Activated CD4-positive, alpha-beta T cell treated with anti-CD3 and anti-CD28 coated beads for 36 hours (primary cell): ENCODE measurements at regions of chr4 and their contacts with region 1.

Region 1: DNA sequence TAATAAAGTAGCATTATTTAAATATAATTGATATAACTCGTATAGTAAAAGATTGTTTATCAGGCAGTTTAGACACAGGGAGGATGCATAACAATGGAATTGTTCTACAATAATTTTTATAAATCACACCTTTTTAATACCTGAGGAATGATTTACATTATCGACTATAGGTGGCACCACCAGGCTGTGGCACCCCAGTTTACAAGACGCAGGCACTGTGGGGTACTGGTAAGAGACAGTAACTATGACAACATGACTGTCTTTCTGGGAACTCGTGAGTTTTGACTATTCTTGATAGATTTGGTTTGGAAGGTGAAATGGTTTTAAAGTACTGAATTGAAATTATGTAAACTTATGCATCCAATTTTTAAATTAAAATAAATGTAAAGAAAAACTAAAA is 27.1 kb upstream of the STBD1 start:
- DNase-seq: peak; percentile 54
- ATAC-seq: no peak
- H3K4me3 Mint-ChIP-seq: no peak overlapping the region
- H3K27ac Mint-ChIP-seq: no peak overlapping the region
- H3K4me1 Mint-ChIP-seq: no peaks in the 10 kb centered on the region
- H3K27me3 Mint-ChIP-seq: peaks cover 5% of the 10 kb centered on the region

Region 2: DNA sequence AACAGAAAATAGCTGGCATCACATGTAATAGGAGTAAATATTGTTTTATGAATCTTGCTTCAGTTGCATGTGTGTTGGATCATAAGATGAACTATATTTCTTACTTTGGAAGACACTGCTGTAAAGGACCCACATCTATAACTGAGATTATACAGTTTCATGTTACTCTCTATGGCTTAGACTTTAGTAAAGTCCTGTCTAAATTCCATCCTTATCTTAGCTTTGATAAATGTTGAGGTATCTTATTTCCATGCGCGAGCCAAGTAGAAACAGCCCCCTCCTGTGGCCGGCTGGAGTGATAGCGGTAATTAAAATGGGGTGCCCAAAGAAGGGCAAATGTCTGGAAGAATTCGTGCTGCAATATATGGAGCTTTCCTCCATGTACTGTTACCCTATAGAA is 98.4 kb after region 1 on chr4:
- CTCF ChIA-PET with region 1: interaction called, 34 read pairs
- POLR2A ChIA-PET with region 1: no interaction called
- intact Hi-C with region 1: loop called (anchors 1 to 5 kb)
- DNase-seq: peak; percentile 74
- ATAC-seq: peak; percentile 30
- H3K4me3 Mint-ChIP-seq: no peak overlapping the region
- H3K27ac Mint-ChIP-seq: no peak overlapping the region
- H3K4me1 Mint-ChIP-seq: no peaks in the 10 kb centered on the region
- H3K27me3 Mint-ChIP-seq: no peaks in the 10 kb centered on the region

Region 3: GRCh38 chr4:76504613-76505465 is 225.4 kb after region 1 on chr4:
- CTCF ChIA-PET with region 1: interaction called, 4 read pairs
- POLR2A ChIA-PET with region 1: no interaction called
- intact Hi-C with region 1: loop called in 1 of 2 experiments (anchors 10 kb)
- DNase-seq: no peak
- ATAC-seq: peak; percentile 60
- H3K4me3 Mint-ChIP-seq: no peak overlapping the region
- H3K27ac Mint-ChIP-seq: no peak overlapping the region
- H3K4me1 Mint-ChIP-seq: no peaks in the 10 kb centered on the region
- H3K27me3 Mint-ChIP-seq: peaks cover 7% of the 10 kb centered on the region